ENCODE measurements at regions of chr1 and their contacts with region 1.

Region 1: GRCh38 chr1:25796811-25797458 is 3.1 kb upstream of the SELENON start:
- DNase-seq: peak; percentile 87 to 92
- ATAC-seq: peak; percentile 35 to 62 (median 44)
- H3K4me3 ChIP-seq: peak overlapping the region; percentile 55
- H3K27ac ChIP-seq: peak overlapping the region; percentile 84
- H3K4me1 ChIP-seq: peaks cover 55% of the 10 kb centered on the region
- H3K27me3 ChIP-seq: no peaks in the 10 kb centered on the region
- CTCF ChIP-seq: peak; percentile 75

Region 2: DNA sequence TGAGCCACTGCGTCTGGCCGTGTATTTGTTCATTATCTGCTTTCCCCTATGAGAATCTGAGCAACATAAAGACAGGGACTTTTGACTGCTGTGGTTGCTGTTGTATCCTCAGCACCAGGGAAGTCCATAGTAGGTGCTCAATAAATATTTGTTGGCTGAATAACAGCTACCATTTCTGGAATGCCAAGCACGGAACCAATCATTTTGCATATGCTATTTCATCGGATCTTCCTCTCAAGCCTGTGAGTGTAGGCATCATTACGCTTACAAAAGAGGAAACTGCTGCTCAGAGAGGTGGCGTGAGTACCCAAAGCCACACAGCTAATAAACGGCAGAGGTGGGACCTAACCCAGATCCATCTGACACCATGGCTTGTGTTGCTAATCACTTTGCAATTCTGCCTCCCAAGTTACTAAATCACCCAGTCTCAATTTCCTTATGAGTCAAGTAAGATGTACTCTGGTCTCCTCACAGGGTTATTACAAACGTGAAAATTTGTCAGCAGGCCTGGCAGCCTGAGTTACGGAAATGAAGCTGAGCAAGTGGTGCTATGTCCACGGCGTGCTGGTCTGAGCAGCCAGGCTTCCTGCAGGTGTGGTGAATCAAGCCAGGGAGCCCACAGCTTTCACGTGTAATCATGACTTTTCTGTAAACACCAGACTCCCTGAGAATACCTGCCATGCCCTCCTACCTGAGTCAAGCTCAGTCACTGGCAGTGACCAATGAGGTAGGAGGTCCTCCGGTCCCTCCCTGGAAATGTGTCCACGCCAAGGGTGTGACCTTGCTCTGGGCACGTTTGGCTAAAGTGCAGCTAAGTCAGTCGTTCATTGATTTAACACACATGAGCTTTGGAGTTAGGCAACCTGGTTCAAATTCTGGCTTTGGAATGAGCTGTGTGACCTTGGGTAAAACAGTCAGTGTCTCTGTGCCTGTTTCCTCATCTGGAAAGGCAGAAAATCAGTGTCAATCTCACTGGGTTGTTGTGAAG is 371.5 kb before region 1 on chr1:
- intact Hi-C with region 1: loop called (anchors 5 to 10 kb)
- DNase-seq: no peak
- ATAC-seq: peak in 2 of 4 donors; percentile 5 to 26
- H3K4me3 ChIP-seq: no peak overlapping the region
- H3K27ac ChIP-seq: peak overlapping the region; percentile 10
- H3K4me1 ChIP-seq: peaks cover 4% of the 10 kb centered on the region
- H3K27me3 ChIP-seq: no peaks in the 10 kb centered on the region
- CTCF ChIP-seq: no peak

Region 3: DNA sequence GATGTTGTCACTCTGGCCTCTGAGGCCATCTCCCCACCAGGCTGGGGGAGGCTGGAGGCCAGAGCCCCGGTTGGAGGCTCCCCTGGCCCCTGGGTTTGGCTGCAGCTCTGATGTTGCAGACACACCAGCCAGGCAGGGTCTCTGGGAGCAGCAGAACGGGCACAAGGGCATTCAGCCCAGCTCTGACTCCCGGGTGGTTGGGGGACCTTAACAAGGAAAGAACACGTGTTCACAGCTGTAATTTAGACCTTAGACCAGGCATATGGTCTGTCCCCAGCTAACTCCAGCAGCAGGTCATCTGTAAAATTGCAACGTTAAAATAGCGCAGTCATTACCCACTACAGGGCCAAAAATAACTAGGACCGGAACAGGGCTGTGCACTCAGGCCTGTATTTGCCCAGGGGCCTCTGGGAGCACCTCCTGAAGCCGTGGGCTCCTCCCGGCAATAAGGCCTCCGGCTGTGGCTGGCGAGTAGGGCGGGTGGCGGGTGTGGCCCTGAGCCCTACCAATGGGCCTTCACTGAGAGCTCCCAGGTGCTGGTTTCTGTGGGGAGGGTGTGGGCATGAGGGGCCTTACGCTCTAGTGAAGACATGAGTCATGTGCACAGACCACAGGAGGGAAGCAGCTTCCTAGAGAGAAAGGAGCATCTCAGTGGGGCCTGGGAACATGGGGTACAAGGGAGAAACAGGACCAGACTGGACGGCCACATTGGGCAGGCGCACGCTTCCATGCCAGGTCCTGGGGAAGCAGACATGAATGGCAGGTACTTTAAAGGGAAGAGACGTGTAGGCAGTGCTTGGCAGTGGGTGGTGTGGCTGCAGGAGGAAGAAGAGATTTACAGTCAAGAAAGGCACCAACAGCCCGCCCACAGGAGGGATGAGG is 247.4 kb before region 1 on chr1:
- intact Hi-C with region 1: loop called in 1 of 2 experiments (anchors 5 kb)
- DNase-seq: peak in 1 of 2 donors; percentile 80
- ATAC-seq: peak; percentile 71 to 88 (median 84)
- H3K4me3 ChIP-seq: peak overlapping the region; percentile 3
- H3K27ac ChIP-seq: peak overlapping the region; percentile 76
- H3K4me1 ChIP-seq: peaks cover 73% of the 10 kb centered on the region
- H3K27me3 ChIP-seq: no peaks in the 10 kb centered on the region
- CTCF ChIP-seq: no peak

Region 4: GRCh38 chr1:25577134-25577920 is 219.6 kb before region 1 on chr1:
- intact Hi-C with region 1: no loop called
- DNase-seq: no peak
- ATAC-seq: no peak
- H3K4me3 ChIP-seq: no peak overlapping the region
- H3K27ac ChIP-seq: no peak overlapping the region
- H3K4me1 ChIP-seq: peaks cover 2% of the 10 kb centered on the region
- H3K27me3 ChIP-seq: no peaks in the 10 kb centered on the region
- CTCF ChIP-seq: no peak

Region 5: DNA sequence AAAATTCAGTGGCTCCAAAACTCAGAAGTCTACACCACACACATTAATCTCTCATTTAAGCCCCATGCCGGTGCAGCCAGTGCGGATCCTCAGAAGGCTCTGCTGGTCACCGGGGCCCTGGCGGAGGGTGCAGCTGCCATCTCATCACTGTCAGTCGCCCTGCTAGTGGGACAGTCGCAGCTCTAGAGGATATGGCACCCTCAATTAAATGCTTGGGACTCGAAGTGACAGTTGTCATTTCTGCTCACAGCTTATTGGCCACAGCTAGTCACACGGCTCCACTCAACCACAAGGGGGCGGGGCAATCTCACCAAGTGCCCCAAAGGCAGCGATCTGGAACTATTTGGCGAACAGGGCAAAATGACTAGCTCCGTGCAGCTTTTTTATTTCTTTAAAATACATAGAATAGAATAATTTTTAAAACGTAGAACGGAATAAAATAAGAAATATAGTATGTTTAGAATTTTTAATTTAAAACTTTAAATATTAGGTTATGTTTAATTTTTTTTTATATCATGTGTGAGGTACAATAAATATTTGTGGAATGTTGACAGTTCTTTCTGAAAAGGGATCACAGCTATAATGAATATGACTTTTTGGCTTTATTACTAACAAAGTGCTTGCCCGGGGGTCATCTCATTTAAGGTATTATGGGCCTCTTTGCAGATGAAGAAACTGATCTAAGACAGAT is 188.3 kb before region 1 on chr1:
- intact Hi-C with region 1: loop called (anchors 2 to 5 kb)
- DNase-seq: peak; percentile 88 to 92
- ATAC-seq: peak; percentile 95 to 98 (median 98)
- H3K4me3 ChIP-seq: peak overlapping the region; percentile 58
- H3K27ac ChIP-seq: peak overlapping the region; percentile 75
- H3K4me1 ChIP-seq: peaks cover 2% of the 10 kb centered on the region
- H3K27me3 ChIP-seq: no peaks in the 10 kb centered on the region
- CTCF ChIP-seq: peak; percentile 63

Region 6: DNA sequence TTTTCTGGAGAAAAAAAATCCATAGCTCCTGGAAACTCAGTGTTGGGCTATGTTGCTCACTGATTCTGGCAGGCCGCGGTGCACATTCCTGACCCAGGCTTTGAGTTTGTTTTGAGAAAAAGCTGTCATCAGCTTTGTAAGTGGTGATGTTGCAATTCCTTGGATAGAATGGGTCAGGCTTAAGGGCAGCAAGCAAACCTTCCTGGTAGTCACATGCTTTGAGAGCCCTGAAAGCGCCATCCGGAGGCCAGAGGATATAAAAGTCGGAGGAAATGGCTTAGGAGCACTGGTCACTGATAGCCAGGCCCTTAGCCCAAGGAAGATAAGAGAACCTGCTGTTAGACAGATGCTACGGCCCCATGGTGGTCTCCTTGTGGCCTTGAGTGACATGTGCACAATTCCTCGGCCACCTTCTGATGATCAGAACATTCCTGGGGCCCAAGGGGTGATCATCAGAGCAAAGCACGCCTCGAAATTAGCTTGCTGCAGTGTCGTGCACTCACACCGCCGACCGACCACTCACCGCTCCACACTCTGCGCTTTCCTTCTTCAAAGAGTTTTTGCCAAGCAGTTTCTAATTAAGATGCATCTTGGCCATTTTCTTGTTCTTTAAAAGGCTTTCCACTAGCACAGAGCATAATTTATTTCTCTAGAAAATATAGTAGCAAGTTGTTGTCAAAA is 101.7 kb before region 1 on chr1:
- intact Hi-C with region 1: loop called in 1 of 2 experiments (anchors 5 kb)
- DNase-seq: peak; percentile 83 to 90
- ATAC-seq: peak; percentile 75 to 81 (median 80)
- H3K4me3 ChIP-seq: no peak overlapping the region
- H3K27ac ChIP-seq: peak overlapping the region; percentile 80
- H3K4me1 ChIP-seq: peaks cover 50% of the 10 kb centered on the region
- H3K27me3 ChIP-seq: no peaks in the 10 kb centered on the region
- CTCF ChIP-seq: peak; percentile 42

Region 7: DNA sequence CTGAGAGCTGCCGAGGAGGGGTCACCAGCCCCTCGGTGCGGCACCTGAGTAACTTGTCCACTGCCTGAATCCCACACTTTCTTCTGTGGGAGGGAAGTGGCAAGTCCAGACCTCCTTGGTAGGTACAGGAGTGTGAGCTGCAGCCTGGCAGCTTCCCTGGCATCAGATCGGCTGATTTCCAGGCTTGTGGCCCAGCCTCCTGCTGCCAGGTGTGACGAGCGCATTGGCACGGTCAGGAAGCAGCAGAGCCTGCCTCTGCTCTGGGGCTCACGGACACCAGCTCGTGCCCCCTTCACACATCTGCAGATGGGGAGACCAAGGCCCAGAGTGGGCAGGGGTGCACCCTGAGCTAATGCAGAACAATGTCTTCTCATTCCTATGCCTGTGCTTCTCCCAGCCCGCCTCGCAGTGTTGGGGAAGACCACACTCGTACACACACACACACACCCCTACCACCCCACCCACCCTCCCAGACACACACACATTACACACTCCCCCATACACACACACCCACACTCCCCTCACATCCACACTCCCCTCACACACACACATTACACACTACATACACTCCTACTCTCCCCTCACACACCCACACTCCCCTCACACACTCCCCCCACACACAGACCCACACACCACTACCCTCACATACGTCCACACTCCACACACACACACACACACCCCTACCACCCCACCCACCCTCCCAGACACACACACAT is 30.1 kb before region 1 on chr1:
- intact Hi-C with region 1: loop called in 1 of 2 experiments (anchors 2 kb)
- DNase-seq: peak in 1 of 2 donors; percentile 80
- ATAC-seq: peak; percentile 60 to 84 (median 76)
- H3K4me3 ChIP-seq: no peak overlapping the region
- H3K27ac ChIP-seq: peak overlapping the region; percentile 27
- H3K4me1 ChIP-seq: peaks cover 23% of the 10 kb centered on the region
- H3K27me3 ChIP-seq: no peaks in the 10 kb centered on the region
- CTCF ChIP-seq: no peak

Region 8: GRCh38 chr1:25873120-25873519 is 76.2 kb after region 1 on chr1:
- intact Hi-C with region 1: no loop called
- DNase-seq: peak in 1 of 2 donors; percentile 36
- ATAC-seq: no peak
- H3K4me3 ChIP-seq: no peak overlapping the region
- H3K27ac ChIP-seq: no peak overlapping the region
- H3K4me1 ChIP-seq: peaks cover 17% of the 10 kb centered on the region
- H3K27me3 ChIP-seq: no peaks in the 10 kb centered on the region
- CTCF ChIP-seq: no peak